Activated CD4-positive, alpha-beta memory T cell treated with anti-CD3 and anti-CD28 coated beads for 36 hours (primary cell): ENCODE measurements at regions of chr4 and their contacts with region 1.

Region 1: GRCh38 chr4:88158489-88159243 is at the start of gene ABCG2:
- DNase-seq: peak; percentile 53
- H3K4me3 Mint-ChIP-seq: peak within 1 kb of the TSS; percentile 71
- H3K27ac Mint-ChIP-seq: peak within 1 kb of the TSS; percentile 55
- H3K4me1 Mint-ChIP-seq: peaks cover 14% of the 10 kb centered on the region
- H3K27me3 Mint-ChIP-seq: peaks cover 6% of the 10 kb centered on the region
- total RNA-seq, gene ABCG2: 0.75 to 0.81 TPM

Region 2: DNA sequence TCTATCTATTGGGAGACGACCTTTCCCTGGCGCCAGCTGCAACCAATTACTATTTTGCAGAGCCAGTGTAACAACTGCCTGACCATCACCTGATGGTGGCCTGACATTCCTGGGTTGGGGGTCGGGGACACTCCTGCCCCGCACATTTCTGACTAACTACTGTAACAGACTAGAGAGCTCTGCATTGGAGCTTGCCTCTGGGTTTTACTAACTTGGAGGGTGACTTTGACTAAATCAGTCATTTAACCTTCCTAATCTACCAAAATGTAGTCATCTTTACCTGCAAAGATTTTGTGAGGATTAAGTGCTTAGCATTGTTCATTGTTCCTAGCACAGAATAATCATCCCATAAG is 37.3 kb after region 1 on chr4:
- CTCF ChIA-PET with region 1: no interaction called
- POLR2A ChIA-PET with region 1: no interaction called
- intact Hi-C with region 1: loop called (anchors 1 kb)
- DNase-seq: no peak
- H3K4me3 Mint-ChIP-seq: no peak overlapping the region
- H3K27ac Mint-ChIP-seq: no peak overlapping the region
- H3K4me1 Mint-ChIP-seq: peaks cover 16% of the 10 kb centered on the region
- H3K27me3 Mint-ChIP-seq: no peaks in the 10 kb centered on the region

Region 3: DNA sequence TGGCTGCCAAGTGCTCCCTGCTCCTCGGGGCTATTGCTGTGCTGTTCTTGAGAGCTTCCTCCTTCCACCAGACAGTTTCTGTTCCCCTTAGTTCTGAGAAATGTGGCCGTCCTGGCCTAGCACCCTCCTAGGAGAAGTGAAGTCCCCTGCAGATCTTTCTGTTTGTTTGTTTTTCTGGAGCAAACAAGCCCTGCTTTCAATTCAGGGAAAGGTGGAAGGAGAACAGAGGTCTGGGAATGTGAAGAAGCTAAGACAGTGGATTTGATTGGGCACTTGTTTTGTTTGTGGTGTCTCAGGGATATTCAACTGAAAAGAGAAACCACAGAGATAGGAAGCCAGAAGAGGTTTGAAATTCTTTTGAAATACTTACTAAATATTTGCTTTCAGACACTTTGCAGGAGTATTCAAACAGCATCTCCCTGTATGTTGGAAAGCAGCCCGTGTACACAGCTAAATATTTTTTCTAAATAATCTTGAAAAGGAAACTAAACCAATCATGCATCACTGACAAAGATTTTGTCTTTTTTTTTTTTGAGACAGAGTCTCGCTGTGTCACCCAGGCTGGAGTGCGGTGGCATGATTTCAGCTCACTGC is 162.2 kb after region 1 on chr4:
- CTCF ChIA-PET with region 1: no interaction called
- POLR2A ChIA-PET with region 1: no interaction called
- intact Hi-C with region 1: no loop called
- DNase-seq: peak; percentile 41
- H3K4me3 Mint-ChIP-seq: peak overlapping the region; percentile 60
- H3K27ac Mint-ChIP-seq: peak overlapping the region; percentile 77
- H3K4me1 Mint-ChIP-seq: peaks cover 20% of the 10 kb centered on the region
- H3K27me3 Mint-ChIP-seq: no peaks in the 10 kb centered on the region